Activated naive CD4-positive, alpha-beta T cell treated with anti-CD3 and anti-CD28 coated beads for 36 hours (primary cell): ENCODE measurements at regions of chr21 and their contacts with region 1.

Region 1: GRCh38 chr21:14545906-14546480 is at the start of gene SAMSN1:
- DNase-seq: peak; percentile 83
- H3K4me3 Mint-ChIP-seq: peak within 1 kb of the TSS; percentile 88
- H3K27ac Mint-ChIP-seq: peak within 1 kb of the TSS; percentile 92
- H3K4me1 Mint-ChIP-seq: peaks cover 53% of the 10 kb centered on the region
- H3K27me3 Mint-ChIP-seq: no peaks in the 10 kb centered on the region
- total RNA-seq, gene SAMSN1: 41.1 to 43.0 TPM

Region 2: DNA sequence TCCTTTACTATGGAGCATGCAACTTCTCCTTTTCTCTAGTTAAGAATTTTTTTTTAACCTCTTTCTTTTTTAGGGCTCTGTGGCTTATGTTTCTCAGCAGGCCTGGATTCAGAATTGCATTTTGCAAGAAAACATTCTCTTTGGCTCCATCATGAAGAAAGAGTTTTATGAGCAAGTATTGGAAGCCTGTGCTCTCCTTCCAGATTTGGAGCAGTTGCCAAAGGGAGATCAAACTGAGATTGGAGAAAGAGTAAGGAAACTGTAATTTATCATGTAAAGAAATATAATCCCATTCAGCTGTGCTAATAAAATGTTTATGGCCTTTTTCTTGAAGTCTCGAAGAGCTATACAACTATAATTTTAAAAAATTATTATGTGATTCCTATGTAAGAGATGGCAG is 233.1 kb before region 1 on chr21:
- CTCF ChIA-PET with region 1: no interaction called
- intact Hi-C with region 1: no loop called
- DNase-seq: no peak
- H3K4me3 Mint-ChIP-seq: no peak overlapping the region
- H3K27ac Mint-ChIP-seq: no peak overlapping the region
- H3K4me1 Mint-ChIP-seq: no peaks in the 10 kb centered on the region
- H3K27me3 Mint-ChIP-seq: peaks cover 10% of the 10 kb centered on the region

Region 3: DNA sequence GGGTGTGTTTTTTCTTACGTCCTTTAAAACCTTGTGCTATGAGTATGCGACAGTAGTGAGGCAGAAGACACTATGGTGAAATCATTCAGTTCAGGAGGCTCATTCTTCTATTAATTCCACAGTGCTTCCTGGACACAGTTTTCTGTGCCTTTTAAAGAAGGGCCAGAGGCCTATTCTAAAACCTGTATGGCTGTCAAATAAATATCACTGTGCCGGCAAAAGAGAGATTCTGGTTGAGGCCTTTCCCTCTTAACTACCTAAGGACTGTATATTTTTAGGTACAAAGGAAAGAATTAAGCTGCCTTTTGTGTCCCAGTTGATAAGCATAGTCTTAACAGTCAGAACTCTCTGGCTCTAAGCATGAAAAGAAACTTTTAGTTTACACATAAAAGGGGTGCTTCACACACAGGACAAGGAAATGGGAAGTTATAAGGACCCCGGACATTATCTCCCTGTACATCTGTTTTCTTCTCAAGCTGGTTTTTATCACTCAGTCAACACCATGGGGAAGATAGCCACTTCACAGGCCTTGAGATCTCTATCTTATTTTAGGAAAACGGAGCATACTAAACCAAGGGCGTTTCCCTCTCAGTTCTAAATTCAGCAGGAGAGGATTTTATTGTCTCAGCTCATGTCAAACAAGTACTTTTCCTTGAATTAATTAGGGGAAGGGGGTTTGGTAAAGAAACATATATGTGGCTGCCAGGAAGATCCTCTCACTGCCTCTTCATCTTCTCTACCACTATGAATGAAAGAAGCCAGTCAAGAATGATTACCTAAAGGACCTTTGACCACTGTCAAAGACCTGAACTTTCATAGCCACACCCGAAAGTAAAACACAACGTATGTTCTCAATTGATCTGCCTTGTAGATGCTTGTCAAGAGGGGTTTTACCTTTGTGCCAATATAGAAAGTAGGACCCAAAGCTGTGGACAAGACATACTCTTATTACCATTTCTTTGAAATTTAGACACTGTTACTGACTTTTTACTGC is 91.7 kb before region 1 on chr21:
- CTCF ChIA-PET with region 1: no interaction called
- intact Hi-C with region 1: loop called (anchors 1 kb)
- DNase-seq: no peak
- H3K4me3 Mint-ChIP-seq: no peak overlapping the region
- H3K27ac Mint-ChIP-seq: peak overlapping the region; percentile 88
- H3K4me1 Mint-ChIP-seq: peaks cover 48% of the 10 kb centered on the region
- H3K27me3 Mint-ChIP-seq: peaks cover 2% of the 10 kb centered on the region

Region 4: GRCh38 chr21:14523234-14523633 is 22.8 kb before region 1 on chr21:
- CTCF ChIA-PET with region 1: interaction called, 6 read pairs
- intact Hi-C with region 1: loop called (anchors 1 kb)
- DNase-seq: peak; percentile 51
- H3K4me3 Mint-ChIP-seq: peak overlapping the region; percentile 55
- H3K27ac Mint-ChIP-seq: peak overlapping the region; percentile 68
- H3K4me1 Mint-ChIP-seq: peaks cover 53% of the 10 kb centered on the region
- H3K27me3 Mint-ChIP-seq: no peaks in the 10 kb centered on the region

Region 5: GRCh38 chr21:14591882-14592281 is 45.9 kb after region 1 on chr21:
- CTCF ChIA-PET with region 1: interaction called, 3 read pairs
- intact Hi-C with region 1: loop called (anchors 2 kb)
- DNase-seq: no peak
- H3K4me3 Mint-ChIP-seq: no peak overlapping the region
- H3K27ac Mint-ChIP-seq: no peak overlapping the region
- H3K4me1 Mint-ChIP-seq: peaks cover 19% of the 10 kb centered on the region
- H3K27me3 Mint-ChIP-seq: no peaks in the 10 kb centered on the region

Region 6: GRCh38 chr21:14675774-14676530 is 130.0 kb after region 1 on chr21:
- CTCF ChIA-PET with region 1: no interaction called
- intact Hi-C with region 1: loop called (anchors 2 kb)
- DNase-seq: peak; percentile 28
- H3K4me3 Mint-ChIP-seq: peak overlapping the region; percentile 63
- H3K27ac Mint-ChIP-seq: peak overlapping the region; percentile 91
- H3K4me1 Mint-ChIP-seq: peaks cover 40% of the 10 kb centered on the region
- H3K27me3 Mint-ChIP-seq: no peaks in the 10 kb centered on the region

Region 7: DNA sequence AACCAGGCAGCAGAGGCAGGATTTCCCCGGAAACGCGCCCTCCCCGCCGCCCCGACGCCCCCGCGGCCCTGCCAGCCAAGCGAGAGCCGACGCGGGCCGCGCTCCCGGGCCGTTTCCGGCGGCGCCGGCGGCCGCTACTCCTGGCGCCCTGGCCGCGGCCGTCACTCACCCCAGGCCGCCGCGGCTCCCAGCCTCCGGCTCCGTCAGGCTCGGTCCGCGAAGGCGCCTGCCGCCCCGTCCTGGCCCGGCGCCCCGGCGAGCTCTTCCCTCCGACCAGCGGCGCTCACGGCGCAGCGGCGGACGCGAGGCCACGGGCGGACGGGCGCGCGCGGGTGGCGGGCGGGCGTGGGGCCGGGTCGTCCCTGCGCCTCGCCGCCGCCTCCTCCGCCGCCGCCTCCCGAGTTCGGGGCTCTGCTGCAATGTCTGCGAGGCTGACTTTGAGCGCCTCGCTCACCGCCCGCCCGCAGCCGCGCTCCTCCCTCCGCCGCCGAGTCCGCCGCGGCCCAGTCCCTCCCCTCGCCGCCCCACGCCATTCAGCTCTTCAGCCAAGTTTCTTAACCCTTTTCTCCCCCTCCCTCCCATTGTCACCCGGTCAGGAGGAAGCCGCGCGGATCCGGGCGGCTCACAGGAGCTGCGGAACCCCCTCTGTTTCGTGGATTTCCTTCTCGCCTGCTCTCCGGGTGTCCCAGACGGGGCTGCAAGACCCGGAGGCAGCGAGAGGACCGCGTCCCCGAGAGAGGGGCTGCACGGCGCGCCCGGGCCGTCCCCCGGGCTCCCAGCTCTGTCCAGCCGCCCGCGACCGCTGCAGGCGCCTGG is 518.8 kb after region 1 on chr21 and contains the start of gene NRIP1:
- CTCF ChIA-PET with region 1: no interaction called
- intact Hi-C with region 1: loop called (anchors 5 kb)
- DNase-seq: peak; percentile 71
- H3K4me3 Mint-ChIP-seq: peak within 1 kb of the TSS; percentile 90
- H3K27ac Mint-ChIP-seq: peak within 1 kb of the TSS; percentile 94
- H3K4me1 Mint-ChIP-seq: peaks cover 36% of the 10 kb centered on the region
- H3K27me3 Mint-ChIP-seq: no peaks in the 10 kb centered on the region
- total RNA-seq, gene NRIP1: 6.1 to 6.5 TPM

Region 8: DNA sequence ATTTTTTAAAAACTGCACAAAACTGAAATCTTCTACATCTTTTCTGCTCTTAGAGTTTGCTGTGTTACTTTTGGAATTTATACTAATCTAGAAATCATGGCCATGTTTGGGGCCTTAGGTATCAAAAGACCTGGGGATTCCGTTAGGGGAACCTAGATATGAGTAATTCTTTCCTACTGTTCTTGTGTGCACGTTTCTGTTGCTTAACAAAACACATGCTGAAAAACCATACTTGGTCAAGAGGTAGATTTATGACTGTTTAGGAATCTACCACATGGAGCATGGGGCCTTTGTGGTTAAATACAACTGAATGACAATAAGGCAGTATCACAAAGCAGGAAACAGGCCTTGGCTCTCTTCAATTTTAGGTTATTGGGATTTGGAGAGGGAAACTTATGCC is 891.9 kb after region 1 on chr21:
- CTCF ChIA-PET with region 1: no interaction called
- intact Hi-C with region 1: loop called (anchors 5 kb)
- DNase-seq: peak; percentile 28
- H3K4me3 Mint-ChIP-seq: no peak overlapping the region
- H3K27ac Mint-ChIP-seq: peak overlapping the region; percentile 36
- H3K4me1 Mint-ChIP-seq: peaks cover 19% of the 10 kb centered on the region
- H3K27me3 Mint-ChIP-seq: no peaks in the 10 kb centered on the region